Activated CD4-positive, alpha-beta T cell treated with anti-CD3 and anti-CD28 coated beads for 36 hours (primary cell): ENCODE measurements at regions of chr1 and their contacts with region 1.

Region 1: GRCh38 chr1:19661721-19662228 is 2.9 kb upstream of the HTR6 start:
- DNase-seq: peak; percentile 69
- ATAC-seq: no peak
- H3K4me3 Mint-ChIP-seq: no peak overlapping the region
- H3K27ac Mint-ChIP-seq: no peak overlapping the region
- H3K4me1 Mint-ChIP-seq: peaks cover 26% of the 10 kb centered on the region
- H3K27me3 Mint-ChIP-seq: peaks cover 17% of the 10 kb centered on the region

Region 2: DNA sequence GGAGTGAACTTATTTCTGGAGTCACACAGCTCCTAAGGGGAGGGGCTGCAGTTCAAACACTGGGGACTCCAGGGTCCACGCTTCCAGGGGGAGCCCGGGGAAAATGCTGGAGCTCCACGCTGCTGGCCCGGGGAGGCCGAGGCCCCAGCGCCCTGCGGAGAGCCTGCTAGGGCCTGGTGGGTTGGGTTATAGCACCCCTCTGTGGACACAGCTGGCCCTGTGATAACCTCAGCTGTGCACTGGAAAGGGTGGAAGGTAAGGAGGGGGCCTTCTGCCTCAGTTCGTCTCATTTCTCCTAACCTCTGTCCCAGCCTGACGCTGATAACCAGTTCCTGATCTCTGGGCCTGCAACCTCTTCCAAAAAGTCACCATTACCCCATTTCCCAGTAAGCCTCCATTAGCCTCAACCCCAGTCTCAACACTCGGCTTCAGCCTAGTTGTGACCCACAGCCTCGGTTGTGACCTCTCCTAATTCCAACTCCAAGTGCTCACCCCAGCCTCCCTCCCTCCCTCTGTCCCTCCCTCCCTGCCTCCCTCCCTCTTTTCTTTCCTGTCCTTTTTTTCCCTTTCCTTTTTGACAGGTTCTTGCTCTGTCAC is 10.5 kb before region 1 on chr1:
- CTCF ChIA-PET with region 1: interaction called, 27 read pairs
- POLR2A ChIA-PET with region 1: no interaction called
- intact Hi-C with region 1: no loop called
- DNase-seq: peak; percentile 73
- ATAC-seq: peak; percentile 72
- H3K4me3 Mint-ChIP-seq: no peak overlapping the region
- H3K27ac Mint-ChIP-seq: no peak overlapping the region
- H3K4me1 Mint-ChIP-seq: peaks cover 18% of the 10 kb centered on the region
- H3K27me3 Mint-ChIP-seq: no peaks in the 10 kb centered on the region

Region 3: DNA sequence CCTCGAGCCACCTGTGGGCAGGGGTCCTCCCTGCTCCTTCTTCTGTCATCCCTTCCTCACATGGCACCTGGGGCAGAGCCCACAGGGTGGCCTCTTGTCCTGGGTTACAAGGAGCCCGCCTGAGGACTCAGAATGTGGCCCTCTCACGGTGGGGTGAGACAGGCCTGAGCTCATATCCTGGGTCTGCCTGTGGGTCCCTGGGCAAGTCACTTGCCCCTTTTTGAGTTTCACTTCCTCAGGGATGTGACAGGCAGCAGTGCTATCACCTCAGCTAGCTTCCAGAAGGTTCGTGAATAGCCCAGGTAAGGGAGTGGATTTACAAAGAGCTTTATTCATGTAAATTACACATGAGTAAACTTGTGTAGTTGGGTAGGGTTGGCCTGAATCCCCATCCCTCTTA is 36.4 kb after region 1 on chr1:
- CTCF ChIA-PET with region 1: interaction called, 151 read pairs
- POLR2A ChIA-PET with region 1: no interaction called
- intact Hi-C with region 1: no loop called
- DNase-seq: no peak
- ATAC-seq: no peak
- H3K4me3 Mint-ChIP-seq: no peak overlapping the region
- H3K27ac Mint-ChIP-seq: no peak overlapping the region
- H3K4me1 Mint-ChIP-seq: no peaks in the 10 kb centered on the region
- H3K27me3 Mint-ChIP-seq: no peaks in the 10 kb centered on the region

Region 4: GRCh38 chr1:19762175-19762779 is 100.5 kb after region 1 on chr1:
- CTCF ChIA-PET with region 1: interaction called, 16 read pairs
- POLR2A ChIA-PET with region 1: no interaction called
- intact Hi-C with region 1: loop called in 1 of 2 experiments (anchors 2 kb)
- DNase-seq: peak; percentile 62
- ATAC-seq: no peak
- H3K4me3 Mint-ChIP-seq: no peak overlapping the region
- H3K27ac Mint-ChIP-seq: no peak overlapping the region
- H3K4me1 Mint-ChIP-seq: peaks cover 19% of the 10 kb centered on the region
- H3K27me3 Mint-ChIP-seq: no peaks in the 10 kb centered on the region

Region 5: GRCh38 chr1:19882111-19883071 is 220.6 kb after region 1 on chr1 and contains the start of gene OTUD3:
- CTCF ChIA-PET with region 1: interaction called, 18 read pairs
- POLR2A ChIA-PET with region 1: no interaction called
- intact Hi-C with region 1: loop called (anchors 1 to 2 kb)
- DNase-seq: peak; percentile 96
- ATAC-seq: peak; percentile 98
- H3K4me3 Mint-ChIP-seq: peak within 1 kb of the TSS; percentile 79
- H3K27ac Mint-ChIP-seq: peak within 1 kb of the TSS; percentile 76
- H3K4me1 Mint-ChIP-seq: peaks cover 36% of the 10 kb centered on the region
- H3K27me3 Mint-ChIP-seq: peaks cover 4% of the 10 kb centered on the region
- total RNA-seq, gene OTUD3: 6.6 to 9.2 TPM

Region 6: DNA sequence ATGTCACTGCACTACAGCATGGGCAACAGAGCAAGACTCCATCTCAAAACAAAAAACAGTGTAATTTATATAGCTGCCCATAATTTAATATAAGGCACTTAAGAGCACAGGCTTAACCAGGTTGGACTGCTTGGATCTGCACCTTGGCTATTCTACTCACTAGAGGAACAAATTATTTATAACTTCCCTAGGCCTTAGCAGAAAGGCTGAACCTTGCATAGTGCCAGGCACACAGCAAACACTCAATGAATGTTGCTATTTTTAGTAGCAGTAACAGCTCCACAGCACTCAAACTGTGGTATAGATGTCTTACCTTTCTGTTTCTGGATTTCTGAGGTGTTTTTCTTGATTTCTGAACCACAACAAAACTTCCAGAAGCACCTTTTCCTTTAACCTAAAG is 1105.5 kb after region 1 on chr1:
- CTCF ChIA-PET with region 1: no interaction called
- POLR2A ChIA-PET with region 1: no interaction called
- intact Hi-C with region 1: no loop called
- DNase-seq: no peak
- ATAC-seq: no peak
- H3K4me3 Mint-ChIP-seq: no peak overlapping the region
- H3K27ac Mint-ChIP-seq: no peak overlapping the region
- H3K4me1 Mint-ChIP-seq: no peaks in the 10 kb centered on the region
- H3K27me3 Mint-ChIP-seq: no peaks in the 10 kb centered on the region